Activated naive CD4-positive, alpha-beta T cell treated with anti-CD3 and anti-CD28 coated beads for 36 hours (primary cell): ENCODE measurements at regions of chr7 and their contacts with region 1.

Region 1: DNA sequence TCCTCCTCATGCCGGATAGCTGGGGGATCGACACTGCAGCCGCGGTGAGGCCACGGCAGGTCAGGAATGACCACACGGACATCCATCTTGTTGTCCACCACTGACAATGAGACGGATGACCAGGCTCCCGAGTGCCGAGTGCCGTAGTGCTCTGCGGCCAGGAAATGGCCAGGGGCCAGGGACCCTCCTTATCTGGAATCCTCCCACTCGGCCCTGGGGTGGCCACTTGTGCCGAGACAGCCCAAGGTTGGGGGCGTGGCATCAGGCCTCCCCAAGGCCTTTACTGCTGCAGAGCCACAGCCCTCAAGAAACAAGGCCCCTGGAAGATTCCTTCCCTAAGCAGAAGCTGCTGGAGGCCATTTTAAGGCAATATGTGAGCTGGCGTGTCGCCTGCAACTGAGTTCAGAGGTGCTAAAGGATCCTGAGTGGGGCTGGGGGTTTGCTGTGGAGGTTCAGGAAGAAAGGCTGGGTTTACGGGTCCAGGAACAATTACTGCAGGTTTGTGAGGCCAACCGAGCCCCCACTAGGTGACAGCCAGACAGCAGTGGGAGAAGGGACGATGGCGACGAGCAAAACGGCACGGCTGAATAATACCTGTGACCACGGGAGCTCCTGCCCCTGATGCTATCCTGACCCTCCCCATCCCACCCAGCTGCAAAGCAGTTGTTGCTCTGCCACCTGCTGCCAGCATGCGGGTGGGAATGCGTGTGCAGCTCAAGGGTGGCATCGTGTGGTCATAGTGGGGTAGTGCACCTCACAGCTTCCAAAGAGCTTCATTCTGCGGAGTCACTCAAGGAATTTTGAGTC is 31.6 kb upstream of the LEP start:
- DNase-seq: peak; percentile 80
- H3K4me3 Mint-ChIP-seq: no peak overlapping the region
- H3K27ac Mint-ChIP-seq: no peak overlapping the region
- H3K4me1 Mint-ChIP-seq: no peaks in the 10 kb centered on the region
- H3K27me3 Mint-ChIP-seq: peaks cover 5% of the 10 kb centered on the region

Region 2: DNA sequence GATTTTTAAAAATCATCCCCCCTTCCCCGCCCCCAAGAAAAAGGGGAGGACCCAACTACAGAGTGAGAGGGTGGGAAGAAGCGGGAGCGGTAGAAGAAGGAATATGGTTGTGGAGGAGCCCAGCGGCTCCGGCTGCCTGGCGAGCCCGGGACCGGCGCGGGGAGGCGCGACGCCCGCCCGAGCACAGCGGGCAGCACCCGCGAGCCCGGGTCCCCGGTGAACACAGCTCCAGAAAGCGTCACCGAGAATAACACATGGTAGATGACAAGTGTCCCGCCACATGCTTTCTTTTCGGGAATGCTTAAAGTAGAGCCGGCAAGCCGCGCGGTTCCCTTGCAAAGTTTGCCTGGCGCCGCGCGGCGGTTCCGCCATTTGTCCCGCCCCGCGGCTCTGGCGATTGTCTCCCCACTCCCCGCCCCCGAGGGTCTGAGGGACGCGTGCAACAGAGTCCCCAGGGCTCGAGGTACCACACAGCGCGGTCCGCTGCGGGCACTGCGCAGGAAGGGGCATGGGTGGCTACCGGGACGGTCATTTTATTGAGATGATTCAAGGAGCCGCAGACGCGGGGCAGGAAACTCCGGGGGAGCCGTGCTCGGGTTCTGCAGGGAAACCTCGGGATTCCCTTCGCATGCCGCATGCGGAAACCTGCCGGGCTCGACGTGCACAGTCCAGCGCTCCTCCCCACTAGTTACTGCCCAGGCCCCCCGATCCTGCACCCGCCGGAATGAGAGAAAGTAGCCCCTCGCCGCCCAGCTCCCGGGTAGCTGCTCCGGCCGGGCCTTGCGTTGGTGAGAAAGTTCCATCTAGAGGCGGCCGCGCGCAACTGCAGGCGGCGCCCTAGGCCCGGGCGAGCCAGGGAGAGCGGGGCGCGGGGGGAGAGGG is 955.9 kb before region 1 on chr7:
- CTCF ChIA-PET with region 1: no interaction called
- intact Hi-C with region 1: loop called (anchors 10 kb)
- DNase-seq: peak; percentile 61
- H3K4me3 Mint-ChIP-seq: peak overlapping the region; percentile 76
- H3K27ac Mint-ChIP-seq: no peak overlapping the region
- H3K4me1 Mint-ChIP-seq: peaks cover 16% of the 10 kb centered on the region
- H3K27me3 Mint-ChIP-seq: peaks cover 57% of the 10 kb centered on the region

Region 3: DNA sequence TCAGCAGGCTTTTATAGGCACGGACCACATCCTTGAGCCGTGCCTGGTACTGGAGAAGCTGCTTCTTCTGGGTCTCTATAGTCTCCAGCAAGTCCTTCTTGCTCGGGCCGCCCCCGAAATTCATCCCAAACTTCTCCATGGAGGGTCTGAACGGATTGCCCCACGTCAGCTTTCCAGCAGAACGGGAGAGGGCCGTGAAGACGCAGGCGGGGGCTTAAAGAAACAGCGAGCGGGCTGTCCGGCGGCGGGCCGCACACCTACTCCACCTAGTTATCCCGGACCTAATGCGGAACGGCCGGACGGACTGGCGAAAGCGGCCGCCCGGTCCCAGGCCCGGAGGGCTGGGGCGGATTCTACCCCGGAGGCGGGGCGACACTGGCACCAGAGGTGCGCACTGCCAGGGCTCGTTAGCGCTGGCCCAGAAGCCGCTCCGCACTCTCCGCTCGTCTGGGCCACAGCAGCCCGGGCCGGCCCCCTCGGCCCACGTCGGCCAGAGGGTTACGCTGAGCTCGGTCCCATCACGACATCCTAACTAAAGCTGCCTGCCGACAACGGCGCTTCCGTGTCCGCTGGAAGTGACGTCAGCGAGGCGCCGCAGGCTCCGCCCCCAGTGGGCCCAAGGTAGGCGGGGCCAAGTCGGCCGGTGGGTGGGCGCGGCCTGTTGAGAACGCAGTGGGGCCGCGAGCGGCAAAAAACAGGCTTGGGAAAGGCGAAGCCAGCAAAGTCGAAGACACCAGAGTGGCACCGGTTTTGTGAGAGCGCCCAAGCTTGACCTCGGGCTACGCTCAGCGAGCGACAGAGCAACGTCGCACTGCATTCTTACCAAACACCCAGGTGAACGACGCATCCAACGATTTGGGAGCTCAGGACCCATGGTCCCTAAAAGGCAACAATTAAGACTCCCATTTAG is 624.1 kb before region 1 on chr7 and contains the start of gene GCC1:
- CTCF ChIA-PET with region 1: no interaction called
- intact Hi-C with region 1: loop called (anchors 10 kb)
- DNase-seq: peak; percentile 94
- H3K4me3 Mint-ChIP-seq: peak within 1 kb of the TSS; percentile 89
- H3K27ac Mint-ChIP-seq: peak within 1 kb of the TSS; percentile 70
- H3K4me1 Mint-ChIP-seq: peaks cover 66% of the 10 kb centered on the region
- H3K27me3 Mint-ChIP-seq: no peaks in the 10 kb centered on the region
- total RNA-seq, gene GCC1: 11.0 to 12.0 TPM

Region 4: DNA sequence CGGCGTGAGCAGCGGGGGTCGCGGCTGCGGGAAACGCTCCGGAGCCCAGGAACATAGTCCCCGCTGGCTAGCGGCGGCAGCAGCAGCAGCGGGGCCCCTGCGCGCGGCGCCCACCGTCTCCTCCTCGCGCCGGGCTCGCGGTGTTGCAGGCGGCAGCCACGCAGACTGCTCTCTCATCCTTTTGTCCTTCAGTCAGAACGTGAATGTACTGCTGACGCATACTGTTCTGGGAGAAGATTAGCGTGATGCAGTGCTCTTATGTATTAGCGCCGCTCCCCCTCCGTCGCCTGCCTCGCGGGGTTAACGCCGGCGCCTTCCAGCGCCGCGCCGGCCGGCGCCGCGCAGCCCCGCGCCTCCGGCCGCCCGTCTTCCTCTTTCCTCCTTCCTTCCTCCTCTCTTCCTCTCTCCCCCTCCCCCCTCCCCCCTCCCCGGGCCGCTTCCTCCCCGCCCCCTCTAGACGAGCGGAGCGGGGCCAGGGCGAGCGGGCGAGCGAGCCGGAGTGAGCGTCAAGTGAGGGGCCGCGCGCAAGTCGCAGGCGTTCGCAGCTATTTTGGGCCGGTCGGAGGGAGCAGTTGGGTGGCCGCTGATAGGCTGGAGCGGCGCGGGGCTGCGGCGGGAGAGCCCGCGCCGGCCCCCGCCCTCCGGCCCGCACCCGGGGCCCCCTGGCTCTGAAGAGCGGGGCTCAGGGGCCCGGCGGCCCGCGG is 177.4 kb before region 1 on chr7:
- CTCF ChIA-PET with region 1: interaction called, 6 read pairs
- intact Hi-C with region 1: loop called (anchors 1 kb)
- DNase-seq: peak; percentile 81
- H3K4me3 Mint-ChIP-seq: peak overlapping the region; percentile 74
- H3K27ac Mint-ChIP-seq: no peak overlapping the region
- H3K4me1 Mint-ChIP-seq: peaks cover 13% of the 10 kb centered on the region
- H3K27me3 Mint-ChIP-seq: peaks cover 6% of the 10 kb centered on the region

Region 5: GRCh38 chr7:128135515-128136214 is 73.8 kb before region 1 on chr7:
- CTCF ChIA-PET with region 1: interaction called, 94 read pairs
- intact Hi-C with region 1: loop called (anchors 1 kb)
- DNase-seq: peak; percentile 78
- H3K4me3 Mint-ChIP-seq: peak overlapping the region; percentile 61
- H3K27ac Mint-ChIP-seq: no peak overlapping the region
- H3K4me1 Mint-ChIP-seq: peaks cover 12% of the 10 kb centered on the region
- H3K27me3 Mint-ChIP-seq: peaks cover 18% of the 10 kb centered on the region

Region 6: DNA sequence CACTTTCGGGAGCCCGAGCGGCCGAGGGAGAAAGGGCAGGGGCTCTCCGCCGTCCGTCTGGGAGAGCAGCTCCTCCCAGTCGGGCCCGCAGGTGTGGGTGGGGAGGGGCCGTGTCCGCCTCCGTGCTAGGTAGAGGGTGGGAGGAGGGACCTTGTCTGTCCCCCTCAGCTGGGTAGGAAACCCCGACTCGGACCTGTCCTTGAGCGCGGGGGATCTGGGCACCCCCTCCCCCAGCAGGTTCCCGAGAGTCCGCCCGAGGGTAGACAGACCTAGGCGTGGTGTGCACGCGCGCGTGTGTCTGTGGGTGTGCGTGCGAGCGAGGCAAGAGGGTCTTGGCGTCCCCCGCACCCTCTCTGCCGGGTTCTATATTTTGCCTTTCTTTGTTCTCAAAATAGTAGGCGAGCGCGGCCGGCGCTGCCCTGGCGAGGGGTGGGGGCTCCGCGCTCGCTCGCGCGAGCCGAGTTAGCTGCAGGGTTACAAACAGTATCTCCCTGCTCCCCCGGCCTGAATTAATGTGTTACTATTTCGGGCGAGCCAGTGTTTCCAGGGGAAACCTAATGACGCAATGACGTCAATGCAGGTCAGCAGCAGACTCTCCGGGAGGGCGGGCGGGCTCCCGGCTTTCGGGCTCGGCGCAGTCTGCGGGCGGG is 42.3 kb before region 1 on chr7:
- CTCF ChIA-PET with region 1: interaction called, 12 read pairs
- intact Hi-C with region 1: loop called (anchors 2 kb)
- DNase-seq: peak; percentile 46
- H3K4me3 Mint-ChIP-seq: peak overlapping the region; percentile 66
- H3K27ac Mint-ChIP-seq: no peak overlapping the region
- H3K4me1 Mint-ChIP-seq: peaks cover 8% of the 10 kb centered on the region
- H3K27me3 Mint-ChIP-seq: peaks cover 45% of the 10 kb centered on the region

Region 7: GRCh38 chr7:128221929-128222403 is 12.5 kb after region 1 on chr7:
- CTCF ChIA-PET with region 1: interaction called, 24 read pairs
- intact Hi-C with region 1: no loop called
- DNase-seq: peak; percentile 20
- H3K4me3 Mint-ChIP-seq: no peak overlapping the region
- H3K27ac Mint-ChIP-seq: no peak overlapping the region
- H3K4me1 Mint-ChIP-seq: no peaks in the 10 kb centered on the region
- H3K27me3 Mint-ChIP-seq: peaks cover 9% of the 10 kb centered on the region